ENCODE measurements at regions of chr18 and their contacts with region 1.

Region 1: GRCh38 chr18:45879681-45880655 is 54.5 kb downstream of the SIGLEC15 start:
- DNase-seq: peak in 1 of 2 experiments; percentile 52
- H3K4me3 ChIP-seq: no peak overlapping the region
- H3K27ac ChIP-seq: no peak overlapping the region
- H3K4me1 ChIP-seq: no peaks in the 10 kb centered on the region
- H3K27me3 ChIP-seq: no peaks in the 10 kb centered on the region
- CTCF ChIP-seq: peak; percentile 98

Region 2: DNA sequence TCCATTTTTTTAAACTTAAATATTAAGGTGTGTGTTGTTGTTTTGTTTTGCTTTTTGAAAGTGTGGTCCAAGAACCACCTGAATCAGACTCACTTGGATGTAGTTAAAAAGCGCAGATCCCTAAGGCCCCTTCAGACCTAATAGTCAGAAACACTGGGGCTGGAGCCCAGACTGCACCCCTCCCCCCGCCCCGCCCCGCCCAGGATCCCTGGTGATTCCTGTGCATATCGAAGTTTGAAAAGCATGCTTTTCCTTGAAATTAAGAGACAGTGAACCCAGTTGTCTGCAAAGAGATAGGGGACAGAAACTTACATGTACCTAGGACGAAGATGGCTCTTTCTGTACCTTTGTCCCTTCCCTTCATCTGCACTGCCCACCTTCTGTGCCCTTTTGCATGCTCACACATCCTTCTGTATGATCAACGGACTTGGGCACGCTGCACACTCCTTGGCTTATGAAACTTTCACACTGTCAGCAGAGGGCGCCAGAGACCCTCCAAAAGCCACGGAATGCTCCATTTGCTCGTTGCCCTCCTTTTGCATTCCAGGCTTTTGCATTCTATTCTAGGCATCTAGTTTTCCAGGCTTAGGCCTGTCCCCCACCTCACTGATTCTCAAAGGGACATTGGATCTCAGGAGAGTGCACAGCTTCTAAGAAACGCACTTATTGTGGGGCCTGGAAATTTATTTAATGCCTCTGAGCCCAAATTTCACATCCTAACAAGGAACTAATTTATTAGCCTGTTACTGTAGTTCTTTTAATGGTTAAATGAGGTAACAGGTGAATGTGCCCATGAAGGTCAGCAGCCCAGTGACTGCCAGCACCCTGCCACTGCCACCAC is 188.8 kb before region 1 on chr18:
- CTCF ChIA-PET with region 1: no interaction called
- POLR2A ChIA-PET with region 1: no interaction called
- intact Hi-C with region 1: loop called (anchors 2 kb)
- DNase-seq: peak; percentile 67 to 68
- H3K4me3 ChIP-seq: no peak overlapping the region
- H3K27ac ChIP-seq: no peak overlapping the region
- H3K4me1 ChIP-seq: peaks cover 4% of the 10 kb centered on the region; the same call in 1 of the 2 replicates
- H3K27me3 ChIP-seq: no peaks in the 10 kb centered on the region
- CTCF ChIP-seq: peak; percentile 92

Region 3: DNA sequence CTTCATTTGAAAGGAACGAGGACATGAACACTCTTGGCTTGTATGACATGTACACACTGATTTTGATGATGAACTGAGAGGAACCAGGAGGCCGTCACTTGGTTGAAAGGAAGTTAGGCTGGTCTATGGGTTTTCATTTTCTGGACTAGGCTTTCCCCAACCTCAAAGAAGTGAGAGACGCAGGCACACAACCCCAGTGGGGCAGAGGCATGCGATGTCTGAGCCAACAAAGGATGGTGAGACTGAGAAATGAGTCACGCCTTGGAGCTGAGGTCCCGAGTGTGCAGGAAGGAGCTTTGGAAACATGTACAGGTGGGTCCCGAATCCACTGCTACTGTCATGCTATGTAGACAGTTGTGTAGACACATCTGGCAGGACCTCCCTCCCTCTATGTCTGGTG is 30.4 kb before region 1 on chr18:
- CTCF ChIA-PET with region 1: no interaction called
- POLR2A ChIA-PET with region 1: no interaction called
- intact Hi-C with region 1: no loop called
- DNase-seq: no peak
- H3K4me3 ChIP-seq: no peak overlapping the region
- H3K27ac ChIP-seq: no peak overlapping the region
- H3K4me1 ChIP-seq: no peaks in the 10 kb centered on the region
- H3K27me3 ChIP-seq: no peaks in the 10 kb centered on the region
- CTCF ChIP-seq: no peak

Measured in PC-9 (cell line).